ENCODE measurements at regions of chr4 and their contacts with region 1.

Region 1: DNA sequence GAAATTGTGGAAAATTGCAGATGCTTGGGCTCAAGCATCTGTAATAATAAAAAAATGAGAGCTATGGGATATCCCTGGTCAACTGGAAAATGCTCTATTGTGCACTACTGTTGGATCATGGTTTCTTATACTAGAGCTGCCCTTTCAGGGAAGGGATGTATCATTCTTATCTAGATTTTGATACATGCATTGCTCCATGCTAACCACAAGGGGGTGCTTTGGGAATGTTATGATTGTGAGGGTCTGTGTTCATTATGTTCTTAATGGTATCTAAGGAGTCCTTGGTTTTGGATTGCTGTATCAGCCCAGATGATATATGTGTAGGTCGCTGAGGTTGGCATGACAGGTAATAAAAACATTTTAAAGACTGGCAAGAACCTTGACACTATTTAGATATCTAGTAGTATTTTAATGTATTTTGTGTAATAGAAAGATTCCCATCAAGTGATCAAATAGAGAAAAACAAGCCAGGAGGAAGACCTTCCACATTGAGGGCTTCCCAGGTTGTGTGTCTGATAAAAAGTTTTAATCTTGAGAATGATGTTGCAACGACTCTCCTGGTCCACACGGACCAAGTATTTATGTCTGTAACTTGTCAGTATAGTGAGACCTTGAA is 49.2 kb upstream of the TLR2 start:
- DNase-seq: no peak
- H3K4me3 ChIP-seq: no peak overlapping the region
- H3K27ac ChIP-seq: no peak overlapping the region
- H3K4me1 ChIP-seq: no peaks in the 10 kb centered on the region
- H3K27me3 ChIP-seq: no peaks in the 10 kb centered on the region
- CTCF ChIP-seq: peak; percentile 73

Region 2: DNA sequence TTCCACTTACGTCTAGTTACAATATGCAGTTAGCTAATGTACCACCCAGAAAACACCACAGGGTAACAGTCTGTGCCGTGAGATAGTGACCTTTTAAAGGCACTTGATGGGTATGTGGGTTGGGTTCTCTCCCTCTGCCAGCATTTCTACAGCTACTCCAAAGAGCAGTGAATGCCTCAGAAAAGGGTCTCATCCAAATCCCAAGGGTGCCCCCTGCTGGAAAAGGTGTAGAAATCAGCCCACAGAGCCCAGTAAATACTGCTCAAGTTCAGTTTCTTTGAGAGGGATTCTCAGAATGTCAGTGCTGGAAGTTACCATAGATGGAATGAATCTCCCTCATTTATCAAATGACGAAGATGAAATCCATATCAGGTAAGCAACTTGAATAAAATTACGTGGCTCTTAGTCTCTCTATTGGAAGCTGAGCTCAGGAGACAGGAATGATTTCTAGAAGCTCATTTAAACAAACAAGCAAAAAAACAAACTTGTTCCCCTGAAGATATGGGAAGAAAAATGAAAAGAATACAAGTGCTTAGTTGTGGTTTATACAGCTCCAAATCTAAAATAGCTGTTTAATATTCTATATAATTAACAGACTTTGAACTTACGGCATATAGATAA is 115.5 kb after region 1 on chr4:
- CTCF ChIA-PET with region 1: no interaction called
- POLR2A ChIA-PET with region 1: no interaction called
- intact Hi-C with region 1: loop called (anchors 1 kb)
- DNase-seq: peak; percentile 49 to 53
- H3K4me3 ChIP-seq: no peak overlapping the region
- H3K27ac ChIP-seq: no peak overlapping the region
- H3K4me1 ChIP-seq: no peaks in the 10 kb centered on the region
- H3K27me3 ChIP-seq: no peaks in the 10 kb centered on the region
- CTCF ChIP-seq: peak; percentile 78